ENCODE measurements at regions of chr15 and their contacts with region 1.

Region 1: DNA sequence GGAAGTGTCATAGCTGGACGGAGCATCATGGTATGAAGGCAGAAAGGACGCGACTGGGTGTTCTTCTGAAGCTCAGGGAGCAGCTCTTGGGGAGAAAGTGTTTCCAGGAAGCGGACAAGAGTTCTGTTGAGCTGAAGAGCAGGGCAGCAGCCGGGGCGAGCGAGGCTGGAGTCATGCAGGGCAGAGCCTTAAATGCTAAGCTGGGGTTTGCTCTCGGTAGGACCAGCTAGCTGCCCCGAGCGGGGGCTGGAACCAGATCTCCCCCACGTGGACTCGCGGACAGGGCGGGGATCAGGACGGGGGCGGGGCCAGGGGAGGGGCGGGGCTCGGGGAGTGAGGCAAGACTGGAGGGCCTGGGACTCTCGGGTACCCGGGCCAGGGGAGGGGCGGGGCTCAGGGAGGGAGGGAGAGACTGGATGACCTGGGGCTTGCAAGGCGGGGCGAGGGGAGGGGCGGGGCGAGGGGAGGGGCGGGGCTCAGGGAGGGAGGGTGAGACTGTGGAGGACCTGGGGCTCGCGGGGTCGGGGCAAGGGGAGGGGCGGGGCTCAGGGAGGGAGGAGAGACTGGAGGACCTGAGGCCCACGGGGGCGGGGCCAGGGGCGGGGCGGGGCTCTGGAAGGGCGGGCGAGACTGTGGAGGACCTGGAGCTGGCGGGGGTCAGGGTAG is 486 bp upstream of the FAH start:
- DNase-seq: peak; percentile 96 to 98 (median 97)
- ATAC-seq: peak; percentile 75
- H3K4me3 ChIP-seq: peak overlapping the region; percentile 47
- H3K27ac ChIP-seq: peak overlapping the region; percentile 68; the same call in 2 of the 3 replicates
- H3K4me1 ChIP-seq: peaks cover 32 to 47% of the 10 kb centered on the region in 2 experiments
- H3K27me3 ChIP-seq: no peaks in the 10 kb centered on the region
- CTCF ChIP-seq: no peak
- EP300 ChIP-seq: no peak
- POLR2A ChIP-seq: peak; percentile 60
- RAD21 ChIP-seq: no peak

Region 2: GRCh38 chr15:79896637-79897379 is 255.5 kb before region 1 on chr15 and contains the start of gene MTHFS:
- CTCF ChIA-PET with region 1: no interaction called
- POLR2A ChIA-PET with region 1: no interaction called
- in situ Hi-C with region 1: loop called (anchors 25 kb)
- intact Hi-C with region 1: loop called (anchors 10 kb)
- DNase-seq: peak; percentile 89 to 93 (median 92)
- ATAC-seq: peak; percentile 98
- H3K4me3 ChIP-seq: peak within 1 kb of the TSS; percentile 69
- H3K27ac ChIP-seq: peak within 1 kb of the TSS; percentile 93
- H3K4me1 ChIP-seq: peaks cover 3 to 8% of the 10 kb centered on the region in 2 experiments
- H3K27me3 ChIP-seq: no peaks in the 10 kb centered on the region
- CTCF ChIP-seq: peak; percentile 41 to 60 (median 49); a peak in 5 of 6 replicates
- EP300 ChIP-seq: no peak
- POLR2A ChIP-seq: peak; percentile 97
- RAD21 ChIP-seq: peak; percentile 35 to 41
- polyA plus RNA-seq, gene MTHFS: 17.8 to 23.6 TPM

Region 3: DNA sequence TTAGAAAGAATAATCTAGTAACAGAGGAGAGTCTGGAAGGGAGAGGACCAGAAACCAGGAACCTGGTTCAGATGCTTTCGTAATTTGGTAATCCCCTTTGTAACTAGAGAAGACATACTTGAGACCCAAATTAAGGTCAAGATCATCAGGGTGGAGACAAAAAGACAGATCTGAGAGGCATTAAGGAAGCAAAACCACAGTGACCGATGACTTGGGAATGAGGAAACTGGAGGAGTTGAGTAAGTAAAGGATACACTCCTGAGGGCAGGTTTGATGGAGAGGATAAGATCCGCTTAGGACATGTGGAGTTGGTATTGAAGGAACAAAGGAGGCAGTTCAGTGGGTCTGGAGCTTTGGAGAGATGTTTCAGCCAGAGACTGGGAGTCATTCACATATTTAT is 157.7 kb before region 1 on chr15:
- CTCF ChIA-PET with region 1: no interaction called
- POLR2A ChIA-PET with region 1: no interaction called
- in situ Hi-C with region 1: no loop called
- intact Hi-C with region 1: no loop called
- DNase-seq: no peak
- ATAC-seq: no peak
- H3K4me3 ChIP-seq: no peak overlapping the region
- H3K27ac ChIP-seq: no peak overlapping the region
- H3K4me1 ChIP-seq: no peaks in the 10 kb centered on the region; a peak in 1 of 5 replicates
- H3K27me3 ChIP-seq: no peaks in the 10 kb centered on the region; a peak in 1 of 5 replicates
- CTCF ChIP-seq: no peak
- EP300 ChIP-seq: no peak
- POLR2A ChIP-seq: no peak
- RAD21 ChIP-seq: no peak

Measured in K562 (cell line).